Activated CD8-positive, alpha-beta T cell treated with anti-CD3 and anti-CD28 coated beads, Interleukin-2, amount 10 ng/mL, durations not matched to agents 7 days and 5 days (primary cell): ENCODE measurements at regions of chr7 and their contacts with region 1.

Region 1: DNA sequence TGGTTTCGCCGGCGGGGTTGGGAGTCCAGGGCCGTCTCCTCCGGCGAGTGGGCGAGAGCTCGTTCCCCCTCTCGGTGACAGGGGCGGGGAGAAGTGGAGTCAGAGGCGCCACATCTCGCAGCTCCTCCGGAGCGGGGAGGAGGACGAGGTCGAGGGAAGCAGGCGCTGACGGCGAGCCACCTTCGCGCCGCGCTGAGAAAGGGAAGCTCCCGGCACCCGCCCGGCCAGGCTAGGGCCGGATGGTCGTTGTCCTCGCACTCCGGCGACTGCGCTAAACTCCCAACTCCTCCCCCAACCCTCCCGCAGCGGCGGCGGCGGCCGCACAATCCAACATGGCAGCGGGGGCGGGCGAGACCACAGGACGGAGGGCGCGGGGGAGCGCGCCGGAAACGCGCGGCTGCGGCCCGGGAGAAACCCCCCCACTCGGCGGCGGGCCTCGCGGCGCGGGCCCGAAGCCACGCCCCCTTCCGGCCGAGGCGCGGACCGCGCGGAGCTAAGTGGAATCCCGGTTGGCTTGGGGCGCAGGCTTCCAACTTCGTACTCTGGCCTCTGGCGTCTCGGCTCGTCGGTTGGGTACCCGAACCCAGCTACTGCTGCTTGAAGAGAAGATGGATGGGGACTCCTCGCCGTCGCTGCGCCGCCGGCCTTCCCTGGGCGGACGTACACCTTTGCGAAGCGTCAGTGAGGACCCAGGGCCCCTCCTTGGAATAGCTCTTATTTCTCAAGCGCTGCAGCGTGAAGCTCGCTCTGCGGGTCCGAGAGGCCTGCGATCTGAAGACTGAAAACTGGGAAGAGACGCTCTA is at the start of gene WASL:
- DNase-seq: peak; percentile 89
- ATAC-seq: peak; percentile 81
- H3K4me3 Mint-ChIP-seq: peak within 1 kb of the TSS; percentile 95
- H3K27ac Mint-ChIP-seq: peak within 1 kb of the TSS; percentile 96
- H3K4me1 Mint-ChIP-seq: peaks cover 44% of the 10 kb centered on the region
- H3K27me3 Mint-ChIP-seq: peaks cover 5% of the 10 kb centered on the region
- total RNA-seq, gene WASL: 7.5 to 7.6 TPM

Region 2: GRCh38 chr7:123719197-123719721 is 29.7 kb before region 1 on chr7:
- CTCF ChIA-PET with region 1: interaction called, 17 read pairs
- POLR2A ChIA-PET with region 1: interaction called, 12 read pairs
- DNase-seq: no peak
- ATAC-seq: peak; percentile 28
- H3K4me3 Mint-ChIP-seq: peak overlapping the region; percentile 68
- H3K27ac Mint-ChIP-seq: peak overlapping the region; percentile 89
- H3K4me1 Mint-ChIP-seq: peaks cover 67% of the 10 kb centered on the region
- H3K27me3 Mint-ChIP-seq: no peaks in the 10 kb centered on the region

Region 3: DNA sequence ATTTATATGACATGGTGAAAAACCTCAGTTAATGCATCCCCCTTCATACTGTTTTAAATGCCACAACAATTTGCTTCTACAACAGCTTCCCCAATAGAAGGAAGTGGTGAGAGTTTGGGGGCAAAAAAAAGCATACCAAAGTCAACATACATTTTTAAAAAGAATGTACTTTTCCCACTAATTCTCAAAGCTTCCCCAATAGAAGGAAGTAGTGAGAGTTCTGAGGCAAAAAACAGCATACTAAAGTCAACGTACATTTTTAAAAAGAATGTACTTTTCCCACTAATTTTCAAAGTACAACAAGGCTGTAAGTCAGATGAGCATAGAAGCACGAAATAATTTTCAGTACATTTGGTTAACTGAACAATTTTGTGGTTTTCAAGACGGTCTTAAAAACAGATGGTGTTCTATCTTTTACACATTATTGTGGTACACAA is 24.1 kb before region 1 on chr7:
- CTCF ChIA-PET with region 1: interaction called, 17 read pairs
- POLR2A ChIA-PET with region 1: interaction called, 12 read pairs
- DNase-seq: no peak
- ATAC-seq: peak; percentile 43
- H3K4me3 Mint-ChIP-seq: peak overlapping the region; percentile 46
- H3K27ac Mint-ChIP-seq: peak overlapping the region; percentile 81
- H3K4me1 Mint-ChIP-seq: peaks cover 59% of the 10 kb centered on the region
- H3K27me3 Mint-ChIP-seq: no peaks in the 10 kb centered on the region

Region 4: DNA sequence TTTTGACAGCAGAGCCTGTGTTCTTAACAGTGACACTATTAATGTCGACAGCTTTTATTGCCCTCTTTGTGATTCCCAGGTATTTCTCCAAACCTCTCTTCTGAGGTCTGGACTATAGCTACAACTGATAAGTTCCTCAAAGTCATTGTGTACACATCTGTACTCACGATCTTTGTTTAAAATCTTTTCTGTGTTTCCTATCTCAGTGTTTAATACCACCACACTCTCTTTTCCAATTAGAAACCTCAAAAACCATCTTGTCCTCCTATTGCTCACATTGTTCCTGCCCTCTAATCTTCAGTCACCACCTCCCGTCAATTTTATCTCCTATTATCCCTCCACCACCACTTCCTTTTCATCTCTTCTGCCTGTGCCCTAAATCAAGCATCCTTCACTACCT is 12.8 kb after region 1 on chr7:
- CTCF ChIA-PET with region 1: no interaction called
- POLR2A ChIA-PET with region 1: no interaction called
- DNase-seq: no peak
- ATAC-seq: no peak
- H3K4me3 Mint-ChIP-seq: no peak overlapping the region
- H3K27ac Mint-ChIP-seq: no peak overlapping the region
- H3K4me1 Mint-ChIP-seq: no peaks in the 10 kb centered on the region
- H3K27me3 Mint-ChIP-seq: peaks cover 12% of the 10 kb centered on the region